Mammary epithelial cell (primary cell): ENCODE measurements at regions of chr10 and their contacts with region 1.

Region 1: DNA sequence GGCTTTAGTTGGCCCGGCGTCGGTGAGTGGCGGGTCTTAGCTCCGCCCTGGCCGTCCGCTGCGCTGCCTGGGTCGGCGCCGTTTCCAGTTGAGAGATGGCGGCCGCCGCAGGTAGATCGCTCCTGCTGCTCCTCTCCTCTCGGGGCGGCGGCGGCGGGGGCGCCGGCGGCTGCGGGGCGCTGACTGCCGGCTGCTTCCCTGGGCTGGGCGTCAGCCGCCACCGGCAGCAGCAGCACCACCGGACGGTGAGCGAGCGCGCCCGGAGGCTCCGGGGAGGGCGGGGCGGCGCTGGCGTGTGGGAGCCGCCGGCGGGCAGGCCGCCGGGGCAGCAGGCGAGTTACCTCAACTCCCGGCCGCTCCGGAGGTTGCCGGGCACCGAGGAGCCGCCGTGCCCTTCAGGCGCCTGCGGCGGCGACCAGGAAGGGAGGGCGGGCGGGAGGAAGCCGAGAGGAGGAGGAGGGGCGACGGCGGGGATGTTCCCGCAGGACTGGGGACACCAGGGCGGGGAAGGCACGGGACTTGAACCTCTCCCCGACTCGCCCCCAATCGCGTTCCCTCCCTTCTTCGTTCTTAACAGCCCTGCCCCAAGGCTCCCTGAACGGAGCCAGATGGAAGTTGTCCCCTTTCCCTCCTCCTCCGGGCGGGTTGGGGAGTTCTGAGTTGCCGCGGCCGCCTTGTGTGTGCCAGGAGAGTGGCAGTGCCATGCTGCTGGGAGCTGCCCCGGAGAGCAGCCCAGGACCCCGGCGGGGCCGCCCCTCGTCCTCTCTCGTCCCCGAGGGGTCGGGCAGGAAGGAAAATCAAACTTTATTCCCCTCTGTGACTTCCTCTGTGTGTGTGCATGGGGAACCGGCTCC is at the start of gene MCU:
- DNase-seq: peak; percentile 91
- H3K4me3 ChIP-seq: peak within 1 kb of the TSS; percentile 65 to 90 (median 76)
- H3K27ac ChIP-seq: peak within 1 kb of the TSS; percentile 55
- H3K4me1 ChIP-seq: peaks cover 19% of the 10 kb centered on the region
- H3K27me3 ChIP-seq: no peaks in the 10 kb centered on the region
- CTCF ChIP-seq: no peak
- total RNA-seq, gene MCU: 21.5 to 32.7 TPM

Region 2: GRCh38 chr10:72364239-72364777 is 328.0 kb before region 1 on chr10:
- CTCF ChIA-PET with region 1: no interaction called
- dilution Hi-C with region 1: no loop called
- in situ Hi-C with region 1: no loop called
- intact Hi-C with region 1: loop called (anchors 1 kb)
- DNase-seq: peak; percentile 92
- H3K4me3 ChIP-seq: no peak overlapping the region
- H3K27ac ChIP-seq: peak overlapping the region; percentile 67
- H3K4me1 ChIP-seq: peaks cover 15% of the 10 kb centered on the region
- H3K27me3 ChIP-seq: no peaks in the 10 kb centered on the region
- CTCF ChIP-seq: peak; percentile 97 to 98

Region 3: DNA sequence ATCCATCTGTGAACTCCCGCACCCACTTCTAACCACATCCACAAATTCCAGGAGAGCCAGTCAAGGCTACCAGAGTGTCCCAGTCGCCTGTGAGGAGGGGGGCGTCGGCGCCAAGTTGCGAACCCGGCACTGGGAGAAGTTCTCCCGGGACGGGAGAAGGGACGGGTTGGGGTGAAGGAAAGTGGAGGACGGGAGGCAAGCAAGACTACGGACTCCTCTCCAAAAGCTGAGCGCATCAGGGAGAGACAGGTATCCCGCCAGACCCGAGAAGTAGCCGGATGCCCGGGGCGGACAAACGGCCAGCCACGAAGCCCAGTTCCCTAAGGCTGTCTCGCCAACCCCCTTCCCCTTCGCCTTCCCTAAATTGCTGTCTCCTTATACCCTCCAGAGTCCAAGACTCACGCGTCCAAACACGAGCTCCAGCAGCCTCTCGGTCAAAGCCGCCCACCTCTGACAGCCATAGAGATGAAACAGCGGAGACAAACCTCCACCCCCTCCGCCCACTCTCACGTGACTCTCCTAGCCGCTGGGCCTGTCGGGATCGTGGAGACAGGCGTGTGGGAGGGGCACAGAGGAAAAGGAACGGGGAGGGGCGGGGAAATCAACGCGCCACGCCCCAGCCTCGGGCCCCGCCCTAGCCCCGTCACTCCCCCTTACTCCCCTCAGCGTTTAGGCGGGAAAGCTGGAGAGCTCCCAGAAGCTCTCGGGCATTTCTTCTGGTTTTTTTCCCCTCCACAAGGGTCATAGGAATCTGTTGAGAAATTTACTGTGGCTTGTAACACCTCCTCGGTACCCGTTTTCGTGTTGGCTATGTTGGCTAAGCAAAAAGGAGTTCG is 66.5 kb before region 1 on chr10 and contains the start of gene MICU1:
- CTCF ChIA-PET with region 1: interaction called, 4 read pairs
- dilution Hi-C with region 1: loop called (anchors 5 kb)
- in situ Hi-C with region 1: no loop called
- intact Hi-C with region 1: loop called (anchors 1 kb)
- DNase-seq: peak; percentile 94
- H3K4me3 ChIP-seq: peak within 1 kb of the TSS; percentile 75 to 95 (median 92)
- H3K27ac ChIP-seq: peak within 1 kb of the TSS; percentile 88
- H3K4me1 ChIP-seq: peaks cover 4% of the 10 kb centered on the region
- H3K27me3 ChIP-seq: no peaks in the 10 kb centered on the region
- CTCF ChIP-seq: no peak
- total RNA-seq, gene MICU1: 32.1 to 38.3 TPM

Region 4: DNA sequence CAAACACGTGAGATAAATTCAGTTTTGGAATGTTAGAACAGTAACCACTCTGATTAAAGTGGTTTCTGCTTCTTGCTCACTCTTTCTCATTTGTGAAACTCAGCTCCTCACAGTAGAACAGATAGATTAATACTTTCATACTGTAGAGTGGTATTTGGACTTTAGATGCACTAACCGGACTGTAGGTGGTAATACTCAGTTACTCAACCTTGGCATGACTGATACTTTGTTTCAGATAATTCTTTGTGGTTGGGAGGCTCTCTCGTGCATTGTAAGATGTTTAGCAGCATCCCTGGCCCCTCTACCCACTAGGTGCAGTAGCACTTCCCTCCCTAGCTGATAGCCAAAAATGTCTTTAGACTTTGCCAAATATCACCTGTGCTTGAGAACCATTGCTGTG is 37.2 kb after region 1 on chr10:
- CTCF ChIA-PET with region 1: no interaction called
- dilution Hi-C with region 1: no loop called
- in situ Hi-C with region 1: no loop called
- intact Hi-C with region 1: no loop called
- DNase-seq: no peak
- H3K4me3 ChIP-seq: no peak overlapping the region
- H3K27ac ChIP-seq: no peak overlapping the region
- H3K4me1 ChIP-seq: no peaks in the 10 kb centered on the region
- H3K27me3 ChIP-seq: no peaks in the 10 kb centered on the region
- CTCF ChIP-seq: no peak

Region 5: GRCh38 chr10:72834183-72834825 is 142.0 kb after region 1 on chr10:
- CTCF ChIA-PET with region 1: interaction called, 5 read pairs
- dilution Hi-C with region 1: no loop called
- in situ Hi-C with region 1: loop called in 1 of 2 experiments (anchors 5 kb)
- intact Hi-C with region 1: loop called (anchors 1 kb)
- DNase-seq: peak; percentile 41
- H3K4me3 ChIP-seq: no peak overlapping the region
- H3K27ac ChIP-seq: no peak overlapping the region
- H3K4me1 ChIP-seq: no peaks in the 10 kb centered on the region
- H3K27me3 ChIP-seq: no peaks in the 10 kb centered on the region
- CTCF ChIP-seq: peak; percentile 51 to 67

Region 6: DNA sequence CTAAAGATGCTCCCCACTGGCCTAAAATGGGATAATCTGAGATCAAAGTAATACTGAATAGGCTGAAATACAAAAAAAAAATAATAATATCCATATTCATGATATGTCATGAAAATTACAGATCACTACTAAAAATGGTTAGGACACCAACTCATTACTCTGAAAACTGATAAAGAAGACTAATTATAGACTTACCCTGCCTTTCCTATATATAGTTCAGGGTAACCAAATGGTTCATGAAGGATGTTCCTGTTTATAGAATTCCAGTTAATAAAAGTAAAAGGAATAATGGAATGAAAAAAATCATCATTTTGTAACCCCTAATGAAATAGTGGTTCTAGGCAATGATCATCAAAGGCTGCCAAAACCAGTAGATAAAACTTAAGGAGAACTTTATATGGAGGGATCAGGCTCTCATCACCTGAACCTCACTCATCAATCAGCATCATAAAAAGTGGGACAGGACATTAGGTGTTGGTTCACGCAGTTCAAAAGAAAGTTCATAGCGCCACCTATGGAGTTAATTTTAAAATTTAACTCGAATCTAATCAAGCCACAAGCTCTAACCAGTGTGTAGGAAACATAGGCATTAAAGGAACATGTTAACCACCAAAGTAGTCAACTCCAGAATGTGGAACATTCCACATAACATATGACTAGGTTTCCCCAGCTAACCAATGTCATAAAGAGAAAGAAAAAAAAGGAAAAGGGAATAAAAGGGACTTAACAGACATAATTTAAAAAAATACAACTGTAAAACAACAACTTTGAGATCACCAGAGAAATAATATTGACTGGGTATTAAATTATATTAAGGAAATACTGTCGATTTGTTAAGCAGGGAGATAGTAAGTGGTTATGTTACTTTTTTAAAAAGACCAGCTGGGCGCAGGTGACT is 368.7 kb after region 1 on chr10:
- CTCF ChIA-PET with region 1: no interaction called
- dilution Hi-C with region 1: no loop called
- in situ Hi-C with region 1: no loop called
- intact Hi-C with region 1: loop called (anchors 1 kb)
- DNase-seq: peak; percentile 37
- H3K4me3 ChIP-seq: no peak overlapping the region
- H3K27ac ChIP-seq: no peak overlapping the region
- H3K4me1 ChIP-seq: no peaks in the 10 kb centered on the region
- H3K27me3 ChIP-seq: no peaks in the 10 kb centered on the region
- CTCF ChIP-seq: peak; percentile 34 to 58